ENCODE measurements at regions of chr7 and their contacts with region 1.

Region 1: DNA sequence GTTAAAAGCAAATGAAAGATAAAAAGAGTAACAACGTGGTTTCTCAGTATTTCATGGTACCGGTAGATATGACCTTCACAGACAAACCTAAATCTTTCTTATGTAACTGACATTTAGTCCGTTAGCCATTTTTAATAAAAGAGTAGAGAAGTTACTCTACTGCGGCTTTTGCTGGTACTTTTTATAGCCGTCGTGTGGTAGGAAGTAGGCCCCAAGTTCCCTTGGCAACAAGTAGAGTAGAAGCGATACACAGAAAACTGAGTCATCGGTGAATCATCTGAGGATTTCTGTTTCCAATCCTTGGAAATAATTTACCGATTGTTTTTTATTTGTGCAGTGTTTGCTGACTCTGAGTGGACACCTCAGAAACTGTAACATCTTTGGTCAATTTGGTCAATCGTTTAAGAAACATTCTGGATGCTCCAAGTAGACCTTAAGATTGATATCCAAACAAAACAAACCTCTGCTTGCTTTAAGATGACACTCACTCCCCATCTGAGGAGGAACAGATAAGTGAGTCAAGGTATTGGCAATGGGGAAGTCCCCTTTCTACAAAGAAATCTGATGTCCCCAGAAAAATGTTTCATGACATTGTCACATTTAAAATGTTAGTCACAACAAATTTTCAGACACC is 63.9 kb upstream of the AHR start:
- DNase-seq: peak; percentile 83
- H3K4me3 Mint-ChIP-seq: peak overlapping the region; percentile 71
- H3K27ac Mint-ChIP-seq: peak overlapping the region; percentile 89
- H3K4me1 Mint-ChIP-seq: peaks cover 48% of the 10 kb centered on the region
- H3K27me3 Mint-ChIP-seq: no peaks in the 10 kb centered on the region

Region 2: DNA sequence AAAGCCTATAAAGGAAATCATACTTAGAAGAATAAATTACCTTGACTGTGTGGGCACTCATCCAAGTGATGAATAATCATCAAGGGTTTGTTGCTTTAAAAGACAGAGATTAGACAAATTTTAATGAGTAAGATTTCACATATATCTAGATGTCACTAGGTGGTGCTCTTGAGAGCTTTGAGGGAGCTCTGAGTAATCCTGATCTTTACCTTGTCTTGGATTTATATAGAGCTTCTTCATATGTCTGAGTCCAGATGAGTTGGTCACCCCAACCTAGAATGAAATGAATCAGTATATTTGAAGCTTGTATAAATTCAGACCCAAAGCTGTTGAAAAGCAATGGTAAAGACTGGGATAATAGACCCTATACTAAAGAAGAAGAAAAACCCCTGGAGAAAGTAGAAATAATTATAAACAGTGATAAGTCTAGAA is 433.4 kb before region 1 on chr7:
- CTCF ChIA-PET with region 1: no interaction called
- POLR2A ChIA-PET with region 1: no interaction called
- intact Hi-C with region 1: no loop called
- DNase-seq: no peak
- H3K4me3 Mint-ChIP-seq: no peak overlapping the region
- H3K27ac Mint-ChIP-seq: no peak overlapping the region
- H3K4me1 Mint-ChIP-seq: no peaks in the 10 kb centered on the region
- H3K27me3 Mint-ChIP-seq: peaks cover 7% of the 10 kb centered on the region

Region 3: GRCh38 chr7:17022920-17023319 is 211.6 kb before region 1 on chr7:
- CTCF ChIA-PET with region 1: interaction called, 3 read pairs
- POLR2A ChIA-PET with region 1: no interaction called
- intact Hi-C with region 1: loop called (anchors 1 kb)
- DNase-seq: peak; percentile 60
- H3K4me3 Mint-ChIP-seq: no peak overlapping the region
- H3K27ac Mint-ChIP-seq: peak overlapping the region; percentile 7
- H3K4me1 Mint-ChIP-seq: peaks cover 17% of the 10 kb centered on the region
- H3K27me3 Mint-ChIP-seq: peaks cover 1% of the 10 kb centered on the region

Region 4: DNA sequence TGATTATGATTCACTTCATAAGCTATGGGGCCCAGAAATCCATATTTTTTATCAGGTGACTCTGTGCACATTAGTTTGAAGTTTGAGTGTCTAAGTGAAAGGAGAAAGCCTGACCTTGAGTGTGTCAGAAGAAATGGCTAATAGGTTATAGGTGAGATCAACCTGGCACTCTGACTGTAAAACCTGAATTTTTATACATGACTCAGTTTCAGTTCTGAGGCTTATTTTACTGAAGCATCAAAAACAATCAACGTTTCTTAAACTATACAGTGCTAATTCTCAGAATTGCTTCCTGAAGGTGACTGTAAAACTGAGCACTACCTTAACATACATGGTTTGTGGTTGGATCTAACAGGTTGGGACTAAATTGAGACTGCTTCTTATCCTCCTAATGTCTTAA is 95.4 kb before region 1 on chr7:
- CTCF ChIA-PET with region 1: no interaction called
- POLR2A ChIA-PET with region 1: interaction called, 3 read pairs
- intact Hi-C with region 1: loop called (anchors 1 kb)
- DNase-seq: no peak
- H3K4me3 Mint-ChIP-seq: no peak overlapping the region
- H3K27ac Mint-ChIP-seq: peak overlapping the region; percentile 82
- H3K4me1 Mint-ChIP-seq: peaks cover 70% of the 10 kb centered on the region
- H3K27me3 Mint-ChIP-seq: no peaks in the 10 kb centered on the region

Region 5: DNA sequence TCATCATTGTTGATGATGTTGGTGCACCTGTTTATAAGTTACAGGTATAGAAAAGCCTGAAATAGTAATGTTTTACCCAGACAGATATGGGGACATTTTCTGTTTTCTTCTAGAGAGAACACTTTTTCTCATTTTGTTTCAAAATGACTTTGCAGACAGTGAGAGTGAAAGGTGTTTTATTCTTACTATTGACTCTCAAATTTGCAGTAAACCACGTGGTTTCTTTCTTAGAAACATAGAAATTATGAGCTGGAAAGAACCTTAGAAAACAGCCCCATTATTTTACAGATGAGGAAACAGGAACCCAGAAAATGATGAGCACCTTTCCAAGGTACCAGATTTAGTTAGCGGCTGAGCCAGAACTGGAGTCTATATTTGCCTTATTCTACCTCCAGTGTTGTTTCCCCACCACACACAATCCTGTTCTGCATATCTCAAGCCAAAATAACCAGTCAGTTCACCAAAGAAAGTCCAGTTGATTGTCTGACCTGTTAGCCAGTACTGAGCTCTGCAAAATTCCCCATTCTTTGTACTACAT is 74.9 kb before region 1 on chr7:
- CTCF ChIA-PET with region 1: no interaction called
- POLR2A ChIA-PET with region 1: no interaction called
- intact Hi-C with region 1: loop called (anchors 1 kb)
- DNase-seq: peak; percentile 33
- H3K4me3 Mint-ChIP-seq: no peak overlapping the region
- H3K27ac Mint-ChIP-seq: peak overlapping the region; percentile 70
- H3K4me1 Mint-ChIP-seq: peaks cover 38% of the 10 kb centered on the region
- H3K27me3 Mint-ChIP-seq: peaks cover 14% of the 10 kb centered on the region

Region 6: GRCh38 chr7:17269341-17270221 is 35.1 kb after region 1 on chr7:
- CTCF ChIA-PET with region 1: no interaction called
- POLR2A ChIA-PET with region 1: no interaction called
- intact Hi-C with region 1: no loop called
- DNase-seq: no peak
- H3K4me3 Mint-ChIP-seq: no peak overlapping the region
- H3K27ac Mint-ChIP-seq: no peak overlapping the region
- H3K4me1 Mint-ChIP-seq: peaks cover 7% of the 10 kb centered on the region
- H3K27me3 Mint-ChIP-seq: no peaks in the 10 kb centered on the region

Region 7: DNA sequence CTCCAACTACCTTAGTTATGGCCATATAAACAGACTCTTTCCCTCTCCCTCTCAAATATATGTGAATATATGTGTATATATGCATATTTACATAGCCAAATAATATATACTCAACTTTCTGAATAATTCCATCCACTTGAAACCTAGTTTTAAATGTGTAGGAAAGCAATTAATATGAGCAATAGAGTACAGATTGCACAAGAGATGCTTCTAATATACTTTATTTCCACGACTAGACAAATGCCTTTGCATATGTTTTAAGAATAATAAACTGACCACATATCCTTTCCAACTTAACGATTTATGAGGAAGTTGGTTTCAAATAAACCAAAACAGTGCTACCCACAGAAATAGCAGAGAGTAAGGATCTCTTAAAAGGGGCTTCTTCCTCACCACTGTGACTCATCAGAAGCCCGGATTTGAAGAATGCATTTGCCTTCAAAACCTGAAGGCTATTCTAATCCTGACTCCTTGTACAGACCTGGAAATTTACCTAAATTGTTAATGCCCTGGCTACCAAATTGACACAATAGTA is 330.2 kb after region 1 on chr7:
- CTCF ChIA-PET with region 1: no interaction called
- POLR2A ChIA-PET with region 1: no interaction called
- intact Hi-C with region 1: no loop called
- DNase-seq: no peak
- H3K4me3 Mint-ChIP-seq: no peak overlapping the region
- H3K27ac Mint-ChIP-seq: no peak overlapping the region
- H3K4me1 Mint-ChIP-seq: no peaks in the 10 kb centered on the region
- H3K27me3 Mint-ChIP-seq: peaks cover 14% of the 10 kb centered on the region

Region 8: DNA sequence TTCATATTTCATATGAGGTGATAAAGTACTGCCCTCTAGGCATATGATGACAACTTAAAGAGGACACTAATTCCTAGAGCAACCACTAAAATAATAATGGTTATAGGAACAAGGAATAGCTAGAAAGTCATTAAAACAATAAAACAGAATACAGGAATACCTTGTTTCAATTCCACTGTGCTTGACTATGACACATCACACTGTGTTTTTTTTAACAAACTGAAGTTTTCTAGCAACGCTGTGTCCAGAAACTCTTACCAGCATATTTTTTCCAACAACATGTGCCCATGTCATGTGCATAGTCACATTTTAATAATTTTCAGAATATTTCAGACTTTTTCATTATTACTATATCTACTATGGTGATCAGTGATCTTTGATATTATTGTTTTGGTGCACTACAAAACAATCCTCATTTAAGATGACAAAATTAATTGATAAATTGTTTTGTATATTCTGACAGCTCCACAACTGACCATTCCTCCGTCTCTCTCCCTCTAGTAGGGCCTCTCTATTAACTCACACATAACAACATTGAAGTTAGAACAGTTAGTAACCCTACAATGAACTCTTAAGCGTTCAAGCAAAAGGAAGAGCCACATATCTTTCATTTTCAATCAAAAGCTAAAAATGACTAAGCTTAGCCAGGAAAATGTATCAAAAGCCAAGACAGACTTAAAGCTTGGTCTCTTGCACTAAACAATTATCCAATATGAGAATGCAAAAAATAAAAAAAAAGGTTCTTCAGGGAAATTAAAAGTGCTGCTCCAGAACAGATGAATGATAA is 619.9 kb after region 1 on chr7:
- CTCF ChIA-PET with region 1: no interaction called
- POLR2A ChIA-PET with region 1: no interaction called
- intact Hi-C with region 1: loop called (anchors 10 kb)
- DNase-seq: no peak
- H3K4me3 Mint-ChIP-seq: no peak overlapping the region
- H3K27ac Mint-ChIP-seq: peak overlapping the region; percentile 20
- H3K4me1 Mint-ChIP-seq: peaks cover 25% of the 10 kb centered on the region
- H3K27me3 Mint-ChIP-seq: no peaks in the 10 kb centered on the region